HepG2 (cell line): ENCODE measurements at regions of chr16 and their contacts with region 1.

Region 1: DNA sequence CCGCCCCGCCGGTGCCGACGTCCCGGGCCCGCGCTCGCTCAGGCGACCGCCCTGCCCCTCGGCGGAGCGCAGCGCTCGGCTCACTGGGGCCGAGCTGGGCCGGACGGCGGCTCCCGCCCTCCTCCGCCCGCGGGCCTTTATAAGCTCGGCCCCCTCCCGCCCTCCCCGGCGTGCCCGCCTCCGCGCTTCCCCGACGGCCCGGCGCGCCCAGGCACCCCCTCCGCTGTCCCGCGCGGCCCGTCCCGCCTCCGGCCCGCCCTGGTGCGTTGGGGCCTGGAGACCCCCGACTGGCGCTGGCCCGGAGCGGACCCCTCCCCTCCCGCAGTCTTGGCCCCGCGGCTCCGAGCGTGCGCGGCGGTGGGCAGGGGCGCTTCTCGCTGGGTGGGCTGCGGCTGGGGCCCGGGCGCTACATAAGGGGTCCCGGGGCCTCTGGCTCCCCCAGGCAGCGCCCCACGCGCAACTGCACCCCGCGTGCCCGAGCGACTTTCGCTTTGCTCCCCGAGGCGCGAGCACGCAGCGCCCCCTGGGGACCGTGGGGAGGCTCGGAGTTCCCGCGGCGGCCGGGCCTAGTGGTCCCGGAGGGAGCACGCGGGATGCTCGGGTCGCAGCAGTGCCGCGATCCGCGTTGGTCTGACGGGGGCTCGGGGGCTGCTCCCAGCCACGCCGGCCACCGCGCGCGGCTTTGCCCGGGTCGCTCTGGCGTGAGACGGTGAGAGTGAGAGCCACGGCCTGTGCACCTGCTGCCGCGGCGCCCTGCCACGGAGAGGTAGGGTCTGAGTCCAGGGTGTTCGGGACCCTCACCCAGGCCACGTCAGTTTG is at the start of gene PIEZO1:
- DNase-seq: no peak
- ATAC-seq: peak; percentile 37
- H3K4me3 ChIP-seq: peak within 1 kb of the TSS; percentile 73 to 87 (median 85)
- H3K27ac ChIP-seq: peak within 1 kb of the TSS; percentile 70
- H3K4me1 ChIP-seq: peaks cover 76% of the 10 kb centered on the region
- H3K27me3 ChIP-seq: no peaks in the 10 kb centered on the region; a peak in 1 of 5 replicates
- CTCF ChIP-seq: peak; percentile 96
- EP300 ChIP-seq: no peak
- POLR2A ChIP-seq: peak; percentile 76 to 82
- RAD21 ChIP-seq: peak; percentile 93
- total RNA-seq, gene PIEZO1: 32.5 and 85.0 TPM in 2 replicates

Region 2: DNA sequence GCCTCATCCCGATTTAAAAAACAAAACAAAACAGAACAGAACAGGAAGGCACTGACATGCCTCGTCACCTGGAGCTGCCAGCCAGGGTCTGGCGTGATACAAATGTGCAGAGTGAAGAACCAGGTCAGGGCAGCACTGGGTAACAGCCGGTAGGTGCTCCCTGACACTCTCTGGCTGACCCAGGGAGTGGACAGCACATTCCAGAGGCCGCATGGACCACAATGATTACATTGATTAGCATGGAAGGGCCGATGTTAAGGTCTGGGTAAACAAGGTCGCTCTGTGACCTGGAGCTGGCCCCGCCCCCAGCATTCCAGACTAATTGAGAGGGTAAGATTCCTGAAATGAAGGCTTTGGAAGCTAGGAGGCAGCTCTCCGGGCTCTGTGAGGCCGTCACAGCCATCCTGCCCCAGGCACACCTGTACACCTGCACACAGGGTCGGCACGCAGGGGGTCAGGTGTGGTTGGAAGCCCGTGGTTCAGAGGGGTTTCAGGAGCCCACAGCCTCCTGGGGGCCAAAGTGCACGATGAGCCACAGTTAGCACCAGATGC is 21.7 kb before region 1 on chr16:
- CTCF ChIA-PET with region 1: interaction called, 10 read pairs
- POLR2A ChIA-PET with region 1: interaction called, 36 read pairs
- in situ Hi-C with region 1: no loop called
- intact Hi-C with region 1: loop called (anchors 1 kb)
- DNase-seq: peak; percentile 97
- ATAC-seq: peak; percentile 75
- H3K4me3 ChIP-seq: peak overlapping the region in 1 of 3 experiments; percentile 24; a peak in 1 of 6 replicates
- H3K27ac ChIP-seq: peak overlapping the region; percentile 33
- H3K4me1 ChIP-seq: peaks cover 66% of the 10 kb centered on the region
- H3K27me3 ChIP-seq: no peaks in the 10 kb centered on the region
- CTCF ChIP-seq: peak; percentile 71
- EP300 ChIP-seq: peak; percentile 73 to 82
- POLR2A ChIP-seq: no peak
- RAD21 ChIP-seq: peak; percentile 80

Region 3: DNA sequence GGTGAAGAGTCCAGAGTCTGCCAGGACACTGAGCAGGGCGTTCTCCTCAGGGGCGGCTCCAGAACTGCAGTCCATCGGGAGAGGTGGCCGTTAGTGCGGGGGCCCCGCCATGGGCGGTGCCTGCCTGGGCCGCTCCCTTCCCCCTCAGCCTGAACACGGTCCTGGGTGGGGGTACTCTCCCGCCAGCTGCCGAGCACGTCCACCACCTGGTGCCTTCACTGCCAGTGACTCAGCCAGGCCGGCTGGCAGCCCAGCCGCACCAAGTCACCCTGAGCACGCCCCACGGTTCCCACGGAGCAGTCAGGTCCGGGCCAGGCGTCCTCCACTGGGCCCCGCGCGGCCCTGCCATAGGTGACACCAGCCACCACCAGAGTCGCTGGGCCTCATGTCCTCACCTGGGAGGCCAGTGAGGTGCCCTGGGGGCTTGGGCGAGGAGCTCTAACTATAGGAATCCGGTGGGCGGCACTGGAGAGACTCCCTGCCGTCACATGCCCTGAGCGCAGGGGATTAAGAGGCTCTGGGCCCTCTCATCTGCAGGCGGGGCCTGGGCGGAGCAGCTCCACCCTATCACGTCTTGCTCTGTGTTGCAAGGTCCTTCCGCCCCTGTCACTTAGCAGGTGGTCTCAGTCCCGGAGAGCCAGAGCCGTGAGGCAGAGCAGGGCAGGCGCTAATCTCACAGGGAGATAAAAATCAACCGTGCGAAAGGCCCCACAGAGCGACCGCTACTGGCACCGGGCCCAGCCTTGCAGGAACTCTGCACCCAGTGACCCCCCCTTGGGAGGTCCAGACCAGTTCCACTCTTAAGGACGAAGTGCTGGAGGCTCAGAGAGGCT is 14.6 kb before region 1 on chr16:
- CTCF ChIA-PET with region 1: no interaction called
- POLR2A ChIA-PET with region 1: interaction called, 10 read pairs
- in situ Hi-C with region 1: no loop called
- intact Hi-C with region 1: loop called (anchors 2 kb)
- DNase-seq: peak; percentile 81
- ATAC-seq: peak; percentile 64
- H3K4me3 ChIP-seq: peak overlapping the region in 2 of 3 experiments; percentile 19 to 41; a peak in 3 of 6 replicates
- H3K27ac ChIP-seq: peak overlapping the region; percentile 26
- H3K4me1 ChIP-seq: peaks cover 36% of the 10 kb centered on the region
- H3K27me3 ChIP-seq: no peaks in the 10 kb centered on the region
- CTCF ChIP-seq: peak; percentile 17; the same call in 1 of the 2 replicates
- EP300 ChIP-seq: no peak
- POLR2A ChIP-seq: 0 out of 4 replicates have a peak, but pooled peaks of 1 of the 2 experiments have one; percentile 24
- RAD21 ChIP-seq: no peak

Region 4: GRCh38 chr16:88811769-88812512 is 26.6 kb after region 1 on chr16 and contains the start of gene APRT:
- CTCF ChIA-PET with region 1: interaction called, 3 read pairs
- POLR2A ChIA-PET with region 1: interaction called, 24 read pairs
- in situ Hi-C with region 1: no loop called
- intact Hi-C with region 1: no loop called
- DNase-seq: peak; percentile 83
- ATAC-seq: peak; percentile 65
- H3K4me3 ChIP-seq: peak within 1 kb of the TSS; percentile 72 to 90 (median 74)
- H3K27ac ChIP-seq: peak within 1 kb of the TSS; percentile 76
- H3K4me1 ChIP-seq: peaks cover 33% of the 10 kb centered on the region
- H3K27me3 ChIP-seq: no peaks in the 10 kb centered on the region; a peak in 1 of 5 replicates
- CTCF ChIP-seq: peak; percentile 55
- EP300 ChIP-seq: no peak
- POLR2A ChIP-seq: peak in 1 of 2 experiments; percentile 94; a peak in 2 of 4 replicates
- RAD21 ChIP-seq: peak; percentile 76
- total RNA-seq, gene APRT: 242 and 274 TPM in 2 replicates